ENCODE measurements at regions of chr15 and their contacts with region 1.

Region 1: DNA sequence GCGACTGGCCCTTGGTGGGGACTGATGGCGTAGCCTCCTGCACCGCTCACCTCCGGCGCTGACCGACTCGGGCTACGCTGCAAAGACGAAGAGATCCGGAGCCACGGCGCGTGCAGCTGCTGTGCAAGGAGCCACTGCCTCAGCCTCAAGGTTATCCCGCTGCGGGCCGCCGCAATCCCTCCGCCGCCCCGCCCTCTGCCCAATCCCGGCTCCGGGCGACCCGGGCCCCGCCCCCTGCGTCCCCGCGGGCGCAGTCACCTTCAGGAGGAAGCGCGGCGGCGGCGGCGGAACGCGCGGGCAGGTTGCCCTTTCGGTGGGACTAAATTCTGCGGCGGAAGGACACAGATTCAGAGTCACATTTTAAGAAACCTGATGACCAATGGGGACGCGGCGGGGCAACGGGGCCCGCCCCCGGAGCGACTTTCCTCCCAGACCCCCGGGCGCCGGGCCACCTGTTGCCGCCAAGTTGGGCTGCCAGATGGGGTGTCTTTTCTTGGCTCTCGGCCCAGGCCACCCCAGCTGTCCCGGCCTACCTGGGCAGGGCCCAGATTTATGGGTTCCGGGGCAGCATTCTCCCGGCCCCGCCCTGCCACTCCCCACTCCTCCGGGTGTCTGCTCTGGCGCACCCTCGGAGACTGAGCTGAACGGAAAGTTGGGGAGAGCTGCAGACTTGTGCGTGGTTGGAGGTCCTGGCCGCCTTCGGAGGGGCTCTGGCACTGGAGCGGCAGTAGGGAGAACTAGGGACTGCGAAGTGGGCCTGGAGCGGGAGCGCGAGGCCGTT is at the start of gene PKM:
- DNase-seq: peak; percentile 92
- ATAC-seq: peak; percentile 38
- H3K4me3 Mint-ChIP-seq: peak within 1 kb of the TSS; percentile 99
- H3K27ac Mint-ChIP-seq: peak within 1 kb of the TSS; percentile 98
- H3K4me1 Mint-ChIP-seq: peaks cover 41% of the 10 kb centered on the region
- H3K27me3 Mint-ChIP-seq: no peaks in the 10 kb centered on the region
- CTCF ChIP-seq: no peak
- total RNA-seq, gene PKM: 1,253 and 1,275 TPM in 2 replicates

Region 2: GRCh38 chr15:72117486-72118399 is 113.5 kb before region 1 on chr15 and contains the start of gene MYO9A:
- CTCF ChIA-PET with region 1: interaction called, 3 read pairs
- POLR2A ChIA-PET with region 1: interaction called, 14 read pairs
- intact Hi-C with region 1: loop called (anchors 1 kb)
- DNase-seq: peak; percentile 93
- ATAC-seq: peak; percentile 74
- H3K4me3 Mint-ChIP-seq: peak within 1 kb of the TSS; percentile 99
- H3K27ac Mint-ChIP-seq: peak within 1 kb of the TSS; percentile 99
- H3K4me1 Mint-ChIP-seq: peaks cover 33% of the 10 kb centered on the region
- H3K27me3 Mint-ChIP-seq: no peaks in the 10 kb centered on the region
- CTCF ChIP-seq: no peak
- total RNA-seq, gene MYO9A: 39.4 and 50.6 TPM in 2 replicates

Region 3: GRCh38 chr15:72216079-72216478 is 15.2 kb before region 1 on chr15:
- CTCF ChIA-PET with region 1: interaction called, 6 read pairs
- POLR2A ChIA-PET with region 1: interaction called, 13 read pairs
- intact Hi-C with region 1: no loop called
- DNase-seq: no peak
- ATAC-seq: no peak
- H3K4me3 Mint-ChIP-seq: no peak overlapping the region
- H3K27ac Mint-ChIP-seq: no peak overlapping the region
- H3K4me1 Mint-ChIP-seq: peaks cover 12% of the 10 kb centered on the region
- H3K27me3 Mint-ChIP-seq: no peaks in the 10 kb centered on the region
- CTCF ChIP-seq: no peak

Region 4: GRCh38 chr15:72285927-72286516 is 54.8 kb after region 1 on chr15:
- CTCF ChIA-PET with region 1: interaction called, 10 read pairs
- POLR2A ChIA-PET with region 1: interaction called, 4 read pairs
- intact Hi-C with region 1: no loop called
- DNase-seq: peak; percentile 26
- ATAC-seq: peak; percentile 66
- H3K4me3 Mint-ChIP-seq: no peak overlapping the region
- H3K27ac Mint-ChIP-seq: no peak overlapping the region
- H3K4me1 Mint-ChIP-seq: no peaks in the 10 kb centered on the region
- H3K27me3 Mint-ChIP-seq: no peaks in the 10 kb centered on the region
- CTCF ChIP-seq: no peak

Region 5: GRCh38 chr15:72375847-72376581 is 144.8 kb after region 1 on chr15 and contains the start of gene HEXA:
- CTCF ChIA-PET with region 1: no interaction called
- POLR2A ChIA-PET with region 1: interaction called, 30 read pairs
- intact Hi-C with region 1: loop called (anchors 2 kb)
- DNase-seq: peak; percentile 99
- ATAC-seq: peak; percentile 83
- H3K4me3 Mint-ChIP-seq: peak within 1 kb of the TSS; percentile 91
- H3K27ac Mint-ChIP-seq: peak within 1 kb of the TSS; percentile 97
- H3K4me1 Mint-ChIP-seq: peaks cover 58% of the 10 kb centered on the region
- H3K27me3 Mint-ChIP-seq: no peaks in the 10 kb centered on the region
- CTCF ChIP-seq: no peak
- total RNA-seq, gene HEXA: 100 and 102 TPM in 2 replicates

Measured in activated B cell treated with CpG ODN at 0.5 μM for 24 hours (primary cell).